Mammary epithelial cell (primary cell): ENCODE measurements at regions of chr19 and their contacts with region 1.

Region 1: DNA sequence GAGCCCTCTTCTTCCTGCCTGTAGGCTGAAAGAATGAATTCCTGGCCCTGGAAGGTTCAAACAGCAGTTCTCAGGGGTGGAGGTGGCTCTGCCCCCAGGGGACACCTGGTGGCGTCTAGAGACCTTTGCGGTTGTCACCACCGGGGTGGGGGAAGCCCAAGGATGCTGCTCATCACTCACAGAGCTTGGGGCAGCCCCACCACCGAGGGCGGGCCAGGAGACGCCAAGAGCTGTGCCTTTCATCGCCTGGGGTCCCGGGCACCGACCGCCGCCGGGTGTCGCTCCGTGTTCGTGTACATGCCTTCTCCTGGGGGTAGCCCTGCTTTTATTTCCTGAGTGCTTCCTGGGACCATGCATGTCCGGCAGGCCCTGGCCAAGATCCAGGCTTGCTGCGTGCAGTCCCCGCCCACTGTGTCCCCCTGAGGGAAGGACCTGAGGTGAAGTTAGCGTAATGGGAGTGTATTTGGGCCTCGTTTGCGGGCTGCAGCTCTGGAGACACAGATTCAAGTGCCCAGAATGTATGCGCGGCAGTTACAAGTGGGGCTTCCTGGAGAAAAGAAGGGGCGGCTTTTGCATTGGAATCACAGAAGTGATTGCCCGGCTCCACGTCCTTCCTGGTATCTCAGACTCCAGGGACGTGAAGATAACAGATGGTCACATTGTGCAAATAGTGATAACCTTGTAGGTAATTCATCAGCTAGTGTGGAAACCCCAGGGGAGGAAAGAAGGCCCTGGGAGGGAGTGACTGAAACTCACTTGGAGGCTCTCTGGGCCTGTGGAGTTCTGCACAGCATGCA is 7.8 kb downstream of the DOT1L start:
- DNase-seq: no peak
- H3K4me3 ChIP-seq: no peak overlapping the region
- H3K27ac ChIP-seq: no peak overlapping the region
- H3K4me1 ChIP-seq: peaks cover 37% of the 10 kb centered on the region
- H3K27me3 ChIP-seq: no peaks in the 10 kb centered on the region
- CTCF ChIP-seq: no peak

Region 2: DNA sequence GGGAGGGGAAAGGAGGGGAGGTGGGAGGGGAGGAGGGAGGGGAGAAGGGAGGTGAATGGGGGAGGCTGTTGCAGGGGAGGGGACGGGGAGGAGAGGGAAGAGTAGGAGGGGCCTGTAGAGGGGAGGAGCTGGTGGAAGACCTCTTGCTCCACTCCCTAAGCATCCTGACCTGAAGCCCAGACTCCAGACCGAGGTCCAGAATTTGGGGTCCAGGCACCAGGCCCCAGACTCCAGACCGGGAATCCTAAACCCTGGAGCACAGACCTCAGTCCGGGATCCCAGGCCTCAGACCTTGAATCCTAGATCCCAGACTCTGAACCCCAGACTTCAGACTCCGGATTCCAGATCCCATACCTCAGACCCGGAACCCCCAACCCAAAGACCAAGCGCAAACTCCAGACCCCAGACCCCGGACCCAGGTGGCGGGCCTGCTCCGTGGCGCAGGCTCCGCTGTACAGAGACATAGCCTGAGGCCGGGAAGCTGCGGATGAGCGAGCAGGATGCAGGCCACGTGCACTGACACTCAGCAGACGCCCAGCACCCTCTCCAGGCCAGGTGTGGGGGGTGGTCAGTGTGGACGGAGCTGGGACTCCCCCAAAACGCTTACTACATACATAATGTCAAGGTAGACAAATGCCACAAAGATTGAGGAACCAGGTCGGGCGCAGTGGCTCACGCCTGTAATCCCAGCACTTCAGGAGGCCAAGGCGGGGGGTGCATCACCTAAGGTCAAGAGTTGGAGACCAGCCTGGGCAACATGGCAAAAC is 155.3 kb before region 1 on chr19:
- CTCF ChIA-PET with region 1: no interaction called
- dilution Hi-C with region 1: no loop called
- in situ Hi-C with region 1: no loop called
- intact Hi-C with region 1: no loop called
- DNase-seq: peak; percentile 66
- H3K4me3 ChIP-seq: peak overlapping the region in 1 of 3 experiments; percentile 38
- H3K27ac ChIP-seq: no peak overlapping the region
- H3K4me1 ChIP-seq: peaks cover 8% of the 10 kb centered on the region
- H3K27me3 ChIP-seq: no peaks in the 10 kb centered on the region
- CTCF ChIP-seq: no peak

Region 3: DNA sequence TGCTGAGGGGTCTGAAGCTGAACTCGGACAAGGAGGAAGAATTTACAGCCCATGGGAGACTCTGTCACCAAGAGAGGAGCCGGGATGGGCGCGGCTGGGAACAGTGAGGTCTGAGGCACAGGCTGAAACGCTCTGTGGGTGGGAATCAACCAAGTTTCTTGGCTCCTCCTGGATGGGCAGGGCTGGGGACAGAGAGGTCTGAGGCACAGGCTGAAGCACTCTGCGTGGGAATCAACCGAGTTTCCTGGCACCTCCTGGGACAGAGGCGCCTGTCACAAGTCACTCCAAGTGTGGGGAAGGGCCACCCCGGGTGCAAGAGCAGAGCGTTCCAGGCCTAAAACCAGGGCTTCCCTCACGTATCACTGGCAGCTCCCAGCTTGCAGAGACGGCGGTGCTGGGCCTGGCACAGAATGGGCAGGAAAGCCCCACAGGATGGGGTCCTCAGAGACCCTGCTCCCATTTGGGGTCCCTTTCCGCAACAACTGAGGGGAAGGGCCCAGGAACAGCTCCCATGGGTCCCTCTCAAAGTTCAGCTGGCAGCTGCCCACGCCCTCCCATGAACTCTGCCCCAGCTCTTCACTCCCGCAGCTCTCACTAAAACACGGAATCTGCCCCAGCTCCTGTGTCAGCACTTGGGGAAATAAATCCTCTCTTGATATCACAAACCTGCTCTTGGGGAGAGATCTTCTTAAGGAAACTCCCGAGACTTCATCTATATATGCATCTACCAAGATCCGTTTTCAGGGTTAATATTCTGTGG is 38.6 kb before region 1 on chr19:
- CTCF ChIA-PET with region 1: no interaction called
- dilution Hi-C with region 1: loop called (anchors 5 kb)
- in situ Hi-C with region 1: no loop called
- intact Hi-C with region 1: no loop called
- DNase-seq: no peak
- H3K4me3 ChIP-seq: no peak overlapping the region
- H3K27ac ChIP-seq: no peak overlapping the region
- H3K4me1 ChIP-seq: no peaks in the 10 kb centered on the region
- H3K27me3 ChIP-seq: no peaks in the 10 kb centered on the region
- CTCF ChIP-seq: no peak

Region 4: DNA sequence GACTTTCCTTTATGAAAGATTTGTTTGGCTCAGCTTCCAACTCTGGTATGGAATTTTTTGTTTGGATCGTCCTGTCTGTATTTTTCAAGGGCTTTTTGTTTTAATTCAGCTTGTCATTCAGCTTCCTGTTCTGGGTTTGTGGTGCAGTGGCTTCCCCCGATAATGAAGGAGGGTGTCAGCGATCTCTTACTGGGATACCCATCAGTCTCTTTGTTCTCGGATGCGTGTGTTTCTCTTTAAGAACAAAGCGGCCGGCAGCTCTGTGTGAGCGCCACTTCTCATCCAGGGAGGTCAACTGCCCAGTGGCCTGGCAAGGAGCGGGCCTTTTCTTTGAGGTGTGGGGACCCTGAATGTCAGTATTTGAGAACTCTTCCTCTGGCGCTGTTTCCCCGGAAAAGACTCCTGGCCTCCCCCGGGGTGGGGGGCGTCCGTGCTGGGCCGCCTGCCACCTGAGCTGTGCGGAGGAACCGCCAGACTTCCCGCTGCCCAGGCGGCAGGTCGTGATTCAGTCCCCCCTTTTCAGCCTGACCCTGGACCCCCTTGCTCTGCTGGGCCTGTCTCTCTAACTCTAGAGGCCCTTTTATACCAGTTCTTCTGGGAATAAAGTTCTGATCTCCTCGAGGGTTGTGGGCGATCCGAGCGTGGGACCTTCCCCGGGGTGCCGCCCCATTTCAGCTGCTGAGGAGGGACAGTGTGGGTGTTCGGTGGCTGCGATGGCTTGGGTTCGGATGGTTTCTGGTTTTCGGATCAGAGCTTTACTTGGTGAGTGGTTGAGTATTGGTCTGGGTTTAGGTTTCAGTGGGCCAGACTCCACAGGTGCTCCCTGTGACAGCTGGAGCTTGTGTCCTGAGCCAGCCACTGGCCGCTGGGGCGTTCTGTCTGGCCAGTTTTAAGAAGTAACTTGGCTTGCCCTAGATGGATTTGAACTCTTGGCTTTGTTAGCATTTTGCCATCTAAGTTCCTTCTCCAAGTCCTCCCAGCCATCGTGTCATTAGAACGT is 68.5 kb after region 1 on chr19:
- CTCF ChIA-PET with region 1: no interaction called
- dilution Hi-C with region 1: no loop called
- in situ Hi-C with region 1: no loop called
- intact Hi-C with region 1: no loop called
- DNase-seq: no peak
- H3K4me3 ChIP-seq: peak overlapping the region; percentile 37 to 55 (median 47)
- H3K27ac ChIP-seq: peak overlapping the region; percentile 59
- H3K4me1 ChIP-seq: peaks cover 41% of the 10 kb centered on the region
- H3K27me3 ChIP-seq: no peaks in the 10 kb centered on the region
- CTCF ChIP-seq: no peak

Region 5: GRCh38 chr19:2391118-2391725 is 219.7 kb after region 1 on chr19:
- CTCF ChIA-PET with region 1: interaction called, 14 read pairs
- dilution Hi-C with region 1: no loop called
- in situ Hi-C with region 1: no loop called
- intact Hi-C with region 1: no loop called
- DNase-seq: peak; percentile 51
- H3K4me3 ChIP-seq: no peak overlapping the region
- H3K27ac ChIP-seq: no peak overlapping the region
- H3K4me1 ChIP-seq: no peaks in the 10 kb centered on the region
- H3K27me3 ChIP-seq: no peaks in the 10 kb centered on the region
- CTCF ChIP-seq: peak; percentile 76